Left cardiac atrium (tissue), 4 donors: ENCODE measurements at regions of chr17 and their contacts with region 1.

Region 1: GRCh38 chr17:32755045-32755805 is 121.7 kb downstream of the MYO1D start:
- DNase-seq: no peak
- ATAC-seq: peak; percentile 72 to 74

Region 2: GRCh38 chr17:32461853-32462617 is 293.2 kb before region 1 on chr17:
- intact Hi-C with region 1: loop called (anchors 5 kb)
- DNase-seq: peak; percentile 56
- ATAC-seq: peak; percentile 44 to 69

Region 3: DNA sequence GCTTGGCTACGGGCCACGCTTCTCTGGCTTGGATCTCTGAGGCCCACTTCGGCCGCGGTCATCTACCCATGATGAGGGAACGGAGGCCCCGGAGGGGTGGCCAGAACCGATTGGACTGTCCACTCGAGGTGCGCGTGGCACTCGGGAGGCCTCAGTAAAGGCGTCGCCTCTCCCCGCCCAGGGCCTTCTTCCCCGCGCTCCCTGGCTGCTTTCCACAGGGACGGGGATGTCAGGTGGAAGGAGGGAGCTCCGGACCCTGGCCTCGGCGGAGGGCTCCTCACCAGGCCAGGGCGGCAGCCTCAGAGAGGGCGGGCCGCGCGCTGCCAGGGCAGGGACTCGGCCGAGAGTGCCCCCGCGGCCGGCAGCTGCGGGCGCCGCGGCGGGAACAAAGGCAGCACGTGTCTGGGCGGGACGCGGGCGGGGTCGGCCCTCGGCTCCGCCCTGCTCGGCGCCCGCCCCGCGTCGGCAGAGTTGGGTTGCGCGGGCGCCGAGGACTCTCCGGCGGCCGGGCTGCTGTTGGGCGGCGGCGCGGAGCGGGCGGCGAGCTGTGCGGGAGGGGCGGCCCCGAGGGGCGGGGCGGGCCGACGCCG is 269.0 kb before region 1 on chr17:
- intact Hi-C with region 1: loop called in 1 of 2 experiments (anchors 10 kb)
- DNase-seq: peak; percentile 78
- ATAC-seq: peak; percentile 85 to 87

Region 4: DNA sequence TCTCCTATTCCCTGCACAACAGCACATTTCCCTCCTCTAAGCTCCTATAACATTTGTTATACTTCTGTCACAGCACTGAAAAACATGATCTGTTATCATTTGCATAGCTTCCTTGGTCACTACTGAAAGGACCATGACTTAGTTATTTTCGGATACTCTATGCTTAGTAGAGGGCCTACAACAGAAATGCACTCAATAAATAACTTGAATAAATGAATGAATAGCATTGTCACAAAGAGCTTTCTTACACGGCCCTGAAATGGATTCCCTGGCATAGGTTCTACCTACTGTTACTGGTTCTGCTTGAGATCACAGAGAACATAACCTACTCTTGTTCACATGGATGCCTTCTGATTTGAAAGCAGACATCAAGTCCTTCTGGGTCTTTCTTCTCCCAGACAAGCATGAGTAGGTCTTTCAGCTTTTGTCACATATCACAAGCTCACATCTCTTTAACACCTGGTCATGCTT is 80.1 kb after region 1 on chr17:
- intact Hi-C with region 1: no loop called
- DNase-seq: no peak
- ATAC-seq: no peak